Lower leg skin (tissue), 4 donors: ENCODE measurements at regions of chr7 and their contacts with region 1.

Region 1: DNA sequence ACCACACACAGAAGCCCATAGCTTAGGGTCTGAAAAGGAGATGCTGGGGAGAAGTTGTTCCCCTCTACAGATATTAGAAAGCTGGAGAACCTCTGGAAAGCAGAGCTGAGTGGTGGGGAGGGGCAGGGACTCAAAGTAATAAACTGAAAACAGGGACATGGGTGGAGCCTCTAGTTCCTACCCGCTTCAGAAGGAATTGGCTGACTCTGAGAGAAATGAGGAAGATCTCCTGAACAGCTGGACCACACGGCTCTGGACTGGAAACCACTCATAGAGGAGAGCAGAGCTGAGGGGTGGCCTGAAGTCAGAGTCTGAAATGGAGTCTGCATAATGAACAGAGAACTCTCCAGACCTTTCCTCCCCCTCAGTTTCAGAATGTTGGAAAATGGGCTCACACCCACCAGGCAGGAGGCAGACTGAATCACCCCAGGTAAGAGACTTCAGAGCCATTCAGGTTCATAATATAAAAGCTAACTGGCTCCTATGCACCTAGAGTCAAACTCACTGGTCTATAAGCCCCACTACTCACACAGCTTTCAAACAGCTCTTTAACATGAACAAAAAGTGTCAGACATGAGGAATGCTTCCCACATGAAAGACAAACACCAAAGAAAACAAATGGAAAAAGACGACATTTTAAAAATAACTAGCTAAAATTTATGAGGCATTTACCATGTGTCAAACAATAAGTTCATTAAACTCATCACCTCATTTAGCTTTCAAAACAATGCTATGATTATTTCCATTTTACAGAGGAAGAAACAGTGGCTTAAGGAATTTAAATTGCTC is 68.1 kb downstream of the RNF216 start:
- DNase-seq: no peak
- H3K4me3 ChIP-seq: no peak overlapping the region
- CTCF ChIP-seq: no peak
- POLR2A ChIP-seq: no peak

Region 2: GRCh38 chr7:5694912-5695726 is 18.2 kb before region 1 on chr7:
- intact Hi-C with region 1: loop called (anchors 1 kb)
- DNase-seq: no peak
- H3K4me3 ChIP-seq: no peak overlapping the region
- CTCF ChIP-seq: no peak
- POLR2A ChIP-seq: no peak

Region 3: DNA sequence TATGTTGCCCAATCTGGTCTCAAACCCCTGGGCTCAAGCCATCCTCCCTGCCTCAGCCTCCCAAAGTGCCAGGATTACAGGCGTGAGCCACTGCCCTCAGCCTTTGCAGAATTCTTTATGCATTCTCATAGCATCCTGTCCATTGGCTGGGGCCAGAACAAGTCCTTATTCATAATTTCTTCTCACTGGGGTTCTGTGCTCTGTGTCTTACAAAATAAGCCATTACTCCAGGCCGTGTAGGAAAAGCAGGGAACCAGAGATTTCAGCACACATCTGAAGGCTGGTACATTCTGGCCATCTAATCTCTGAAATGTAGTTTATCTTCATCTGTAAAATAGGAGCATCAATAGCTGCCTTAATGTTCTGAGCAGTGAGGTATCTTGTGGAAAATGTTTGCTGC is 157.0 kb after region 1 on chr7:
- intact Hi-C with region 1: no loop called
- DNase-seq: no peak
- H3K4me3 ChIP-seq: no peak overlapping the region
- CTCF ChIP-seq: no peak
- POLR2A ChIP-seq: no peak